ENCODE measurements at regions of chr1 and their contacts with region 1.

Region 1: GRCh38 chr1:201582705-201583442 is 43.9 kb downstream of the NAV1 start:
- DNase-seq: peak in 3 of 5 donors; percentile 27 to 52 (median 43)
- ATAC-seq: peak in 3 of 4 donors; percentile 9 to 43 (median 23)
- H3K4me3 ChIP-seq: no peak overlapping the region
- H3K27ac ChIP-seq: peak overlapping the region in 2 of 12 donors; percentile 20 to 46
- H3K4me1 ChIP-seq: peaks cover 0 to 39% (median 22%) of the 10 kb centered on the region in 12 donors
- H3K27me3 ChIP-seq: no peaks in the 10 kb centered on the region
- CTCF ChIP-seq: no peak
- POLR2A ChIP-seq: no peak

Region 2: GRCh38 chr1:201634261-201634660 is 51.4 kb after region 1 on chr1:
- intact Hi-C with region 1: loop called in 1 of 10 experiments (anchors 5 kb)
- DNase-seq: no peak
- ATAC-seq: no peak
- H3K4me3 ChIP-seq: no peak overlapping the region
- H3K27ac ChIP-seq: peak overlapping the region in 4 of 12 donors; percentile 40 to 81 (median 56)
- H3K4me1 ChIP-seq: peaks cover 4 to 87% (median 82%) of the 10 kb centered on the region in 12 donors
- H3K27me3 ChIP-seq: no peaks in the 10 kb centered on the region
- CTCF ChIP-seq: no peak
- POLR2A ChIP-seq: no peak